ENCODE measurements at regions of chr19 and their contacts with region 1.

Region 1: DNA sequence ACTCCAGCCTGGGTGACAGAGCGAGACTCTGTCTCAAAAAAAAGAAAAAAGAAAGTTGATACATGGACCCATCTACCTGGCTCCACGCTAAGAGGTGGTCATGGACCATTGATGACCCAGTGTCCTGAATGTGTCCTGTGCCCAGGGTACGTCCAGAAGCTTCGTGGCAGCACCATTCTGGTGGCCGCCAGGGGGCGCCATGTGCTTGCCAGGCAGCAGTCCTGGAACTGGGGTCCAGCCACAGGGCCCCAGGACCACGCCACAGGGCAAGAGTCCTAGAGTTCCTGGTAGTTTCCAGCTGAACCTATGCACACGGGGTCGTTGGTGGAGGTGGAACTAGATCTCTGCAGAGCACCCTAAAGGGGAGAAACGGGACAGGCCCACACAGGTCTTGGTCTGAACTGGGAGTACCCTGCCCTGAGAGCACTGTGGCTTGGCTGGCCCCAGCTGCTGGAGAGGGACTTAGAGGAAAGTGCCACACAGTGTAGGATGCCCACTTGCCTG is 19.9 kb upstream of the FBXO27 start:
- DNase-seq: peak; percentile 75
- H3K4me3 ChIP-seq: peak overlapping the region in 1 of 2 experiments; percentile 20; a peak in 1 of 4 replicates
- H3K27ac ChIP-seq: no peak overlapping the region
- H3K4me1 ChIP-seq: no peaks in the 10 kb centered on the region; a peak in 1 of 4 replicates
- H3K27me3 ChIP-seq: no peaks in the 10 kb centered on the region
- CTCF ChIP-seq: peak; percentile 92
- EP300 ChIP-seq: no peak
- RAD21 ChIP-seq: peak; percentile 66

Region 2: GRCh38 chr19:38805180-38805579 is 247.1 kb before region 1 on chr19:
- CTCF ChIA-PET with region 1: no interaction called
- POLR2A ChIA-PET with region 1: no interaction called
- DNase-seq: no peak
- H3K4me3 ChIP-seq: no peak overlapping the region
- H3K27ac ChIP-seq: no peak overlapping the region
- H3K4me1 ChIP-seq: no peaks in the 10 kb centered on the region
- H3K27me3 ChIP-seq: no peaks in the 10 kb centered on the region
- CTCF ChIP-seq: no peak
- EP300 ChIP-seq: no peak
- RAD21 ChIP-seq: no peak

Region 3: DNA sequence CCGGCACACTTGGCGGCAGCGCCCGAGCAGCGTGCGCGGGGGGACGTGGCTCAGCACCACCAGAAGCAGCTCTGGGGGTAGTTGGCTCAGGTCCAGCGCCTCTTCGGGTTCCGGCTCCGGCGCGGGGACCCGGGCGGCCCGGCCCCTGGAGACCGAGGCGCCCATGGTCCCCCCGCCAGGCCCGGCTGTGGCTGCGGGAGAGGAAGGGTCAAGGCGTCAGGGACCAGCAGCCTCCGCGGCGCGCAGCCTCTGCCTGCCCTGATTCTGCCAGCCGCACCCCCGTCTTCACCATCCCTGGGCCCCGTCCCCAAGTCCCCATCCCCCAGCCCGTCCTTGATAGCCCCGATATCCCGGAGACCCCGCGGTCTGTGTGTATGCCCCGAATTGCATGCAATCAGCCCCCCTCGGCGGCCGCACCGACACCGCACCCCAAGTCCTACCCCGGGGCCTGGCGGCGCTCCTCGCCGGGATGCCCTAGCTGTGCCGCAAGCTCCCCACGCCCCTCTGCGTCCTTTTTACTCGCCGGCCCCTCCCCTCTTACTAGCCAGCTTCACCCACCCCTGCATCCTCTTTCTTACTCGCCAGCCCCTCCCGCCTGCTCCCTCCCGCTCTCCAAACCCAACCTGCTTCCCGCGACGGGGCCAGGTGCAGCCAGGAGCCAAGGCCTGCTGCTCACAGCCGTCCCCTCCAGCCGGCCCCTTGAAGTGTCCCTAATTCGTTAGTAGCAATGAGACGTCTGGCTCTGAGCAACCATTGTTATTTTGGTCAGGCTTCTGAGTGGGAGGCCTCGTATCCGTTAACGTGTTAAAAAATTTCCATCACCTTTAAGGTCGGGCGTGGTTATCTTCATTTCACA is 20.0 kb before region 1 on chr19 and contains the start of gene FBXO27:
- CTCF ChIA-PET with region 1: interaction called, 26 read pairs
- POLR2A ChIA-PET with region 1: no interaction called
- DNase-seq: peak; percentile 84
- H3K4me3 ChIP-seq: peak within 1 kb of the TSS; percentile 60 to 68
- H3K27ac ChIP-seq: peak within 1 kb of the TSS in 1 of 2 experiments; percentile 78; a peak in 2 of 4 replicates
- H3K4me1 ChIP-seq: peaks cover 0 to 3% of the 10 kb centered on the region in 2 experiments; a peak in 1 of 4 replicates
- H3K27me3 ChIP-seq: no peaks in the 10 kb centered on the region
- CTCF ChIP-seq: no peak
- EP300 ChIP-seq: no peak
- RAD21 ChIP-seq: no peak
- polyA plus RNA-seq, gene FBXO27: 5.0 and 5.8 TPM in 2 replicates

Region 4: GRCh38 chr19:39038098-39038497 is 14.2 kb before region 1 on chr19:
- CTCF ChIA-PET with region 1: interaction called, 26 read pairs
- POLR2A ChIA-PET with region 1: no interaction called
- DNase-seq: peak; percentile 71
- H3K4me3 ChIP-seq: no peak overlapping the region
- H3K27ac ChIP-seq: no peak overlapping the region
- H3K4me1 ChIP-seq: no peaks in the 10 kb centered on the region; a peak in 1 of 4 replicates
- H3K27me3 ChIP-seq: no peaks in the 10 kb centered on the region
- CTCF ChIP-seq: peak; percentile 39
- EP300 ChIP-seq: no peak
- RAD21 ChIP-seq: peak; percentile 50

Region 5: GRCh38 chr19:39064405-39064804 is 12.1 kb after region 1 on chr19:
- CTCF ChIA-PET with region 1: interaction called, 12 read pairs
- POLR2A ChIA-PET with region 1: no interaction called
- DNase-seq: no peak
- H3K4me3 ChIP-seq: no peak overlapping the region
- H3K27ac ChIP-seq: no peak overlapping the region
- H3K4me1 ChIP-seq: no peaks in the 10 kb centered on the region
- H3K27me3 ChIP-seq: no peaks in the 10 kb centered on the region
- CTCF ChIP-seq: no peak
- EP300 ChIP-seq: no peak
- RAD21 ChIP-seq: no peak

Measured in SK-N-SH (cell line).